GM12878 (cell line): ENCODE measurements at regions of chr22 and their contacts with region 1.

Region 1: GRCh38 chr22:37260901-37261336 is 16.9 kb upstream of the RAC2 start:
- DNase-seq: no peak
- ATAC-seq: peak; percentile 74
- H3K4me3 ChIP-seq: no peak overlapping the region
- H3K27ac ChIP-seq: no peak overlapping the region
- H3K4me1 ChIP-seq: peaks cover 2% of the 10 kb centered on the region; the same call in 1 of the 2 replicates
- H3K27me3 ChIP-seq: no peaks in the 10 kb centered on the region
- CTCF ChIP-seq: peak; percentile 83 to 96 (median 92)
- EP300 ChIP-seq: no peak
- POLR2A ChIP-seq: no peak
- RAD21 ChIP-seq: peak; percentile 84

Region 2: GRCh38 chr22:36797911-36798673 is 462.8 kb before region 1 on chr22:
- CTCF ChIA-PET with region 1: no interaction called
- POLR2A ChIA-PET with region 1: no interaction called
- RAD21 ChIA-PET with region 1: no interaction called
- SMC1A ChIA-PET with region 1: no interaction called
- in situ Hi-C with region 1: no loop called
- intact Hi-C with region 1: no loop called
- DNase-seq: no peak
- ATAC-seq: peak; percentile 54
- H3K4me3 ChIP-seq: no peak overlapping the region
- H3K27ac ChIP-seq: no peak overlapping the region
- H3K4me1 ChIP-seq: peaks cover 13% of the 10 kb centered on the region
- H3K27me3 ChIP-seq: no peaks in the 10 kb centered on the region
- CTCF ChIP-seq: no peak
- EP300 ChIP-seq: no peak
- POLR2A ChIP-seq: no peak
- RAD21 ChIP-seq: no peak

Region 3: GRCh38 chr22:37043828-37044538 is 216.9 kb before region 1 on chr22:
- CTCF ChIA-PET with region 1: interaction called, 27 read pairs
- POLR2A ChIA-PET with region 1: no interaction called
- RAD21 ChIA-PET with region 1: no interaction called
- SMC1A ChIA-PET with region 1: interaction called, 4 read pairs
- in situ Hi-C with region 1: no loop called
- intact Hi-C with region 1: no loop called
- DNase-seq: no peak
- ATAC-seq: peak; percentile 99
- H3K4me3 ChIP-seq: no peak overlapping the region
- H3K27ac ChIP-seq: no peak overlapping the region
- H3K4me1 ChIP-seq: peaks cover 10% of the 10 kb centered on the region
- H3K27me3 ChIP-seq: peaks cover 0 to 2% of the 10 kb centered on the region in 2 experiments; a peak in 1 of 4 replicates
- CTCF ChIP-seq: peak; percentile 81 to 92 (median 85)
- EP300 ChIP-seq: no peak
- POLR2A ChIP-seq: no peak
- RAD21 ChIP-seq: peak; percentile 58

Region 4: DNA sequence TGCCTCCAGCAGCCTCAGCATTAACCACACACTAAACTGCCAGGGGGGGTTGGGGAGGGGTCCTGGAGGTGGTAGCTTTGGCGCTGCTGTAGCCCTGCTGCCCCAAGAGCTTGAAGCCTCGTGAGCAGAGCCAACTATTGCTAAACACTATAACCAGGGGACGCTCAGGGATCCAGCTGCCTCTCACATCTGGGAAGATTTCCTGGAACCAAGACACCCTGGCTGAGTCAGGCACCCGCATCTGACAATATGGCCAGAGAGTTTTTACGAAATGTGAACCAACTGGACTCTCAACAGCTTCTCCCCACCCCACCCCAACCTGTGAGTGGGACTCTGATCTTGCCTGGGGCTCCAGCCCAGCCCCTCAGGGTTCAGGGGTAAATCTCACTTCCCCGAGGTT is 87.2 kb before region 1 on chr22:
- CTCF ChIA-PET with region 1: interaction called, 10 read pairs
- POLR2A ChIA-PET with region 1: no interaction called
- RAD21 ChIA-PET with region 1: no interaction called
- SMC1A ChIA-PET with region 1: no interaction called
- in situ Hi-C with region 1: no loop called
- intact Hi-C with region 1: no loop called
- DNase-seq: no peak
- ATAC-seq: no peak
- H3K4me3 ChIP-seq: no peak overlapping the region
- H3K27ac ChIP-seq: no peak overlapping the region
- H3K4me1 ChIP-seq: peaks cover 4% of the 10 kb centered on the region; the same call in 1 of the 2 replicates
- H3K27me3 ChIP-seq: no peaks in the 10 kb centered on the region; a peak in 2 of 4 replicates
- CTCF ChIP-seq: no peak
- EP300 ChIP-seq: no peak
- POLR2A ChIP-seq: no peak
- RAD21 ChIP-seq: no peak

Region 5: DNA sequence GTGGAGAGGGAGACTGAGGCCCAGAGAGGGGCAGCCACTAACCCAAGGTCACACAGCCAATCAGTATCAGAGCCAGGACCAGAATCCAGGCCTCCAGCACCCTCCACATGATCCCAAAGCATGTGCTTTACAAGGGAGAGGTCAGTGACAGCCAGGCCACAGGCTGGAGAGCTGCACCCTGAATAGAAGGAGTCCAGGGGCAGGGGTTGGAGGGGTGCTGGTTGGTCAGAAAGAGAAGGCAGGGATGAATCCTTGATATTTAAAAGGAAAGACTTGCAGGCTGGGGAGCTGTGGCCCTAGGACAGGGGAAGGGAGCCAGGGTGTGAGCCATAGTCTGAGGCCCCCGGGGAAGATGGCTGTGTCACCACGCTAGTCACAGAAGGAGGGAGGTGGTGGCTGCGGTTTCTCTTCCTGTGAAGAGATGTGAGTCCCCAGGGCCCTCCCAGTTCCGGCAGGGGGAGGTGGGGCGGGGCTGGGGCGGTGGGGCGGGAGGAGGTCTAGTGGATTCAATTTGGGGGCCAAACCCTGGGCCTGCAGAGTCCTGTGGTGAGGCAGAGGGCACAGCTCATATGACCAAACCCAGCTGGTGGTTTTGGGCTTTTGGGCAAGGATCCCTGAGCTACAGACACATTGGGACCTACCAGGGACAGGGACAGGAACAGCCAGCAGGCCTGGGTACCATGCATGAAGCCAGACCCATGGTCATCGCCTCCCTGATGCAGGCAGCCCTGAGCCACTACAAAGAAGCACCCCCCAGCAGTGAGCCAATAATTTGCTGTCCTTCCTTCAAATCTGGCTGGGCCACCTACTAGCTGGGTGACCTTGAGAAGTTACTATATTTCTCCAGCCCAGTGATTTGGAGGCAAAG is 30.9 kb before region 1 on chr22:
- CTCF ChIA-PET with region 1: interaction called, 84 read pairs
- POLR2A ChIA-PET with region 1: interaction called, 6 read pairs
- RAD21 ChIA-PET with region 1: interaction called, 41 read pairs
- SMC1A ChIA-PET with region 1: interaction called, 56 read pairs
- in situ Hi-C with region 1: no loop called
- intact Hi-C with region 1: loop called (anchors 2 kb)
- DNase-seq: peak; percentile 60
- ATAC-seq: peak; percentile 88
- H3K4me3 ChIP-seq: peak overlapping the region; percentile 60; the same call in 1 of the 2 replicates
- H3K27ac ChIP-seq: peak overlapping the region; percentile 100
- H3K4me1 ChIP-seq: peaks cover 70% of the 10 kb centered on the region
- H3K27me3 ChIP-seq: no peaks in the 10 kb centered on the region
- CTCF ChIP-seq: no peak
- EP300 ChIP-seq: no peak
- POLR2A ChIP-seq: peak; percentile 69
- RAD21 ChIP-seq: no peak

Region 6: DNA sequence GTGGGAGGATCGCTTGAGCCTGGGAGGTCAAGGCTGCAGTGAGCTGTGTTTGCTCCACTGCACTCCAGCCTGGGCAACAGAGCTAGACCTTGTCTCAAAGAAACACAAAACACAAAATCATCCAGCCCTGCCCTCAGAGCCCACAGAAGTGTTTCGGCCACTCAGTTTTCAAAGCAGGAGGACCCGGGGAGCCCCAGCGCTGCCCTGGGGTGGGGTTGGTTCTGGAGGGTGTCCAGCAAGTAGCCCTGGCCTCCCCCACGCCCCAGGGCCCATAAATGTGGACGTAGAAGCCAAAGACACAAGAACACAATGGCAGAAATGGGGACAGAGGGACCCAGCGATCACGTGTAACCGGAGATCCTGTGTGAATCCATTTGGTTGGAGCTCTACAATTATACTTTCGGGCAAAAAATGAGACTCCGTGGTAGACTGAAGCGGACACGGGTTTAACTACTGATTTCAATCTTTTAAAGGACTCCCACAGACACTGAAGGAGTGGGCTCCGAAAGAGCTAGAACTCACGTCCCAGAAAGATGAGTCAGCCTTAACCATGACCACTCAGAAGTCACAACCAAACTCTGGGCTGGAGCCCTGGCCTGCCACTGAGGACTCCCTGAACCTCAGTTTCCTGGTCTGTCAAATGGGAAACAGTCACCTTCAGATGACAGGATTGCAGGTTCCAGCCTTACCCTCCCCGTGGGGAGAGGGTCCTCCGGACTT is 12.4 kb after region 1 on chr22:
- CTCF ChIA-PET with region 1: interaction called, 124 read pairs
- POLR2A ChIA-PET with region 1: interaction called, 4 read pairs
- RAD21 ChIA-PET with region 1: interaction called, 10 read pairs
- SMC1A ChIA-PET with region 1: interaction called, 23 read pairs
- in situ Hi-C with region 1: no loop called
- intact Hi-C with region 1: no loop called
- DNase-seq: no peak
- ATAC-seq: peak; percentile 80
- H3K4me3 ChIP-seq: no peak overlapping the region
- H3K27ac ChIP-seq: peak overlapping the region; percentile 6; the same call in 1 of the 2 replicates
- H3K4me1 ChIP-seq: peaks cover 25% of the 10 kb centered on the region
- H3K27me3 ChIP-seq: no peaks in the 10 kb centered on the region
- CTCF ChIP-seq: no peak
- EP300 ChIP-seq: no peak
- POLR2A ChIP-seq: no peak
- RAD21 ChIP-seq: no peak

Region 7: DNA sequence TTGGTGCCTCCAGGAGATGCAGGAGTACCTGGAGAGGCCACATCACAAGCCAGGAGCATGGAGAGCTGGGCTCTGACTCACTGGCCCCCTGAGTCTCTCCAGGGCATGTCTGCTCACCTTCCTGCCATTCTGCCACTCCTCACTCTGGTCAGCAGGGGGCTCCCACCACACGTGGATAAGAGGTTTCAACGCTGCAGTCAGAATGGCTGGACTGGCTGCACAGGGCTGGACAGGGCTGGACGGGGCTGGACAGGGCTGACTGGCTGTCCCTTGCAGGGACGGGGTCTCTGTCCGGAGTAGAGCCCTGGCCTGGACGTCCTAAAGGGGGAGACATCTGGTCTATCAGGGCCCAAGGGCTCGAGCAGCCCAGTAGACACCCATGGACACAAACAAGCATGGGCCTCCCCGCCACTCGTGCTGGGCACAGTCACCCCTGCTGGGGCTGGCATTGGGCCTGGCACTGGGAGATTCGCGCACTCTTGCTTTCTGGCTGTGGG is 56.0 kb after region 1 on chr22:
- CTCF ChIA-PET with region 1: interaction called, 181 read pairs
- POLR2A ChIA-PET with region 1: interaction called, 3 read pairs
- RAD21 ChIA-PET with region 1: interaction called, 35 read pairs
- SMC1A ChIA-PET with region 1: interaction called, 65 read pairs
- in situ Hi-C with region 1: no loop called
- intact Hi-C with region 1: loop called (anchors 2 kb)
- DNase-seq: no peak
- ATAC-seq: peak; percentile 83
- H3K4me3 ChIP-seq: no peak overlapping the region
- H3K27ac ChIP-seq: no peak overlapping the region
- H3K4me1 ChIP-seq: peaks cover 21% of the 10 kb centered on the region
- H3K27me3 ChIP-seq: peaks cover 0 to 1% of the 10 kb centered on the region in 2 experiments; a peak in 1 of 4 replicates
- CTCF ChIP-seq: peak; percentile 91 to 97 (median 96); a peak in 5 of 6 replicates
- EP300 ChIP-seq: no peak
- POLR2A ChIP-seq: no peak
- RAD21 ChIP-seq: peak; percentile 99

Region 8: GRCh38 chr22:37416827-37417226 is 155.9 kb after region 1 on chr22:
- CTCF ChIA-PET with region 1: no interaction called
- POLR2A ChIA-PET with region 1: no interaction called
- RAD21 ChIA-PET with region 1: no interaction called
- SMC1A ChIA-PET with region 1: no interaction called
- in situ Hi-C with region 1: no loop called
- intact Hi-C with region 1: no loop called
- DNase-seq: no peak
- ATAC-seq: peak; percentile 71
- H3K4me3 ChIP-seq: no peak overlapping the region
- H3K27ac ChIP-seq: no peak overlapping the region
- H3K4me1 ChIP-seq: no peaks in the 10 kb centered on the region
- H3K27me3 ChIP-seq: peaks cover 10% of the 10 kb centered on the region in 2 experiments
- CTCF ChIP-seq: no peak
- EP300 ChIP-seq: no peak
- POLR2A ChIP-seq: no peak
- RAD21 ChIP-seq: no peak

Region 9: GRCh38 chr22:37457093-37457893 is 196.4 kb after region 1 on chr22:
- CTCF ChIA-PET with region 1: interaction called, 24 read pairs
- POLR2A ChIA-PET with region 1: no interaction called
- RAD21 ChIA-PET with region 1: interaction called, 4 read pairs
- SMC1A ChIA-PET with region 1: interaction called, 21 read pairs
- in situ Hi-C with region 1: loop called (anchors 5 kb)
- intact Hi-C with region 1: no loop called
- DNase-seq: peak; percentile 24
- ATAC-seq: peak; percentile 100
- H3K4me3 ChIP-seq: no peak overlapping the region
- H3K27ac ChIP-seq: no peak overlapping the region
- H3K4me1 ChIP-seq: no peaks in the 10 kb centered on the region
- H3K27me3 ChIP-seq: no peaks in the 10 kb centered on the region
- CTCF ChIP-seq: peak; percentile 88 to 98 (median 96)
- EP300 ChIP-seq: no peak
- POLR2A ChIP-seq: no peak
- RAD21 ChIP-seq: peak; percentile 97